ENCODE measurements at regions of chr3 and their contacts with region 1.

Region 1: GRCh38 chr3:12663936-12664908 is at the start of gene RAF1:
- DNase-seq: peak; percentile 94 to 98
- H3K4me3 ChIP-seq: peak within 1 kb of the TSS; percentile 84
- H3K27ac ChIP-seq: peak within 1 kb of the TSS; percentile 89
- H3K4me1 ChIP-seq: peaks cover 38% of the 10 kb centered on the region
- H3K27me3 ChIP-seq: no peaks in the 10 kb centered on the region
- CTCF ChIP-seq: no peak
- total RNA-seq, gene RAF1: 65.3 and 72.4 TPM in 2 replicates

Region 2: DNA sequence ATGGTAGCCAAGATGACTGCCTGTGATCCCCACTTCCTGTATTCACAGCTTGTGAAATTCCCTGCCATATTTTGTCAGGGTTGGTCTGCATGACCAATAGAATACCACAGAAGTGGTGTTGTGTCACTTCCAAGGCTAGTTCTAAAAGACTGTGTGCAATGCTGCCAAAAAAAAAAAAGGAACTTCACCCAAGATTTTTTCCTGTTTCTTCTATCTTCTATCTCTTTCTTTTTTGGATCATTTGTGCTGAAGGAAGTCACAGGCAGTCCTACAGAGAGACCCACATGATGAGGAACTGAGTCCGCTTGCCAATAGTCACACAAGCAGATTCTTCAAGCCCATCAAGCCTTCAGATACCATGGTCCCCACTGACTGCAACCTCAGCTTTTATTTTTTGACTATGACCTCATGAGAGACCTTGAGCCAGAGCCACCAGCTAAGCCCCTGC is 17.7 kb after region 1 on chr3:
- CTCF ChIA-PET with region 1: interaction called, 4 read pairs
- POLR2A ChIA-PET with region 1: interaction called, 11 read pairs
- intact Hi-C with region 1: no loop called
- DNase-seq: peak in 1 of 2 experiments; percentile 57
- H3K4me3 ChIP-seq: no peak overlapping the region
- H3K27ac ChIP-seq: no peak overlapping the region
- H3K4me1 ChIP-seq: peaks cover 17% of the 10 kb centered on the region
- H3K27me3 ChIP-seq: no peaks in the 10 kb centered on the region
- CTCF ChIP-seq: no peak

Region 3: GRCh38 chr3:12750223-12750622 is 86.0 kb after region 1 on chr3:
- CTCF ChIA-PET with region 1: no interaction called
- POLR2A ChIA-PET with region 1: no interaction called
- intact Hi-C with region 1: loop called (anchors 5 kb)
- DNase-seq: peak; percentile 65 to 74
- H3K4me3 ChIP-seq: no peak overlapping the region
- H3K27ac ChIP-seq: peak overlapping the region; percentile 93
- H3K4me1 ChIP-seq: peaks cover 58% of the 10 kb centered on the region
- H3K27me3 ChIP-seq: no peaks in the 10 kb centered on the region
- CTCF ChIP-seq: no peak

Region 4: GRCh38 chr3:12901623-12902045 is 237.4 kb after region 1 on chr3:
- CTCF ChIA-PET with region 1: no interaction called
- POLR2A ChIA-PET with region 1: no interaction called
- intact Hi-C with region 1: no loop called
- DNase-seq: no peak
- H3K4me3 ChIP-seq: no peak overlapping the region
- H3K27ac ChIP-seq: no peak overlapping the region
- H3K4me1 ChIP-seq: no peaks in the 10 kb centered on the region
- H3K27me3 ChIP-seq: no peaks in the 10 kb centered on the region
- CTCF ChIP-seq: no peak